ENCODE measurements at regions of chr11 and their contacts with region 1.

Region 1: GRCh38 chr11:62753736-62754603 is at the start of gene ZBTB3:
- DNase-seq: peak; percentile 99
- ATAC-seq: peak; percentile 92
- H3K4me3 ChIP-seq: peak within 1 kb of the TSS; percentile 82 to 94 (median 86)
- H3K4me3 Mint-ChIP-seq: peak within 1 kb of the TSS; percentile 99
- H3K27ac ChIP-seq: peak within 1 kb of the TSS; percentile 80 to 84
- H3K27ac Mint-ChIP-seq: peak within 1 kb of the TSS; percentile 99
- H3K4me1 ChIP-seq: peaks cover 7 to 21% of the 10 kb centered on the region in 2 donors
- H3K4me1 Mint-ChIP-seq: peaks cover 27% of the 10 kb centered on the region
- H3K27me3 ChIP-seq: no peaks in the 10 kb centered on the region
- H3K27me3 Mint-ChIP-seq: no peaks in the 10 kb centered on the region
- CTCF ChIP-seq: no peak
- total RNA-seq, gene ZBTB3: 22.0 and 24.8 TPM in 2 replicates

Region 2: GRCh38 chr11:62017871-62018655 is 735.9 kb before region 1 on chr11:
- CTCF ChIA-PET with region 1: no interaction called
- POLR2A ChIA-PET with region 1: interaction called, 13 read pairs
- intact Hi-C with region 1: no loop called
- DNase-seq: no peak
- ATAC-seq: no peak
- H3K4me3 ChIP-seq: no peak overlapping the region
- H3K4me3 Mint-ChIP-seq: no peak overlapping the region
- H3K27ac ChIP-seq: no peak overlapping the region
- H3K27ac Mint-ChIP-seq: no peak overlapping the region
- H3K4me1 ChIP-seq: peaks cover 6 to 9% of the 10 kb centered on the region in 2 donors
- H3K4me1 Mint-ChIP-seq: peaks cover 9% of the 10 kb centered on the region
- H3K27me3 ChIP-seq: no peaks in the 10 kb centered on the region
- H3K27me3 Mint-ChIP-seq: no peaks in the 10 kb centered on the region
- CTCF ChIP-seq: no peak

Region 3: DNA sequence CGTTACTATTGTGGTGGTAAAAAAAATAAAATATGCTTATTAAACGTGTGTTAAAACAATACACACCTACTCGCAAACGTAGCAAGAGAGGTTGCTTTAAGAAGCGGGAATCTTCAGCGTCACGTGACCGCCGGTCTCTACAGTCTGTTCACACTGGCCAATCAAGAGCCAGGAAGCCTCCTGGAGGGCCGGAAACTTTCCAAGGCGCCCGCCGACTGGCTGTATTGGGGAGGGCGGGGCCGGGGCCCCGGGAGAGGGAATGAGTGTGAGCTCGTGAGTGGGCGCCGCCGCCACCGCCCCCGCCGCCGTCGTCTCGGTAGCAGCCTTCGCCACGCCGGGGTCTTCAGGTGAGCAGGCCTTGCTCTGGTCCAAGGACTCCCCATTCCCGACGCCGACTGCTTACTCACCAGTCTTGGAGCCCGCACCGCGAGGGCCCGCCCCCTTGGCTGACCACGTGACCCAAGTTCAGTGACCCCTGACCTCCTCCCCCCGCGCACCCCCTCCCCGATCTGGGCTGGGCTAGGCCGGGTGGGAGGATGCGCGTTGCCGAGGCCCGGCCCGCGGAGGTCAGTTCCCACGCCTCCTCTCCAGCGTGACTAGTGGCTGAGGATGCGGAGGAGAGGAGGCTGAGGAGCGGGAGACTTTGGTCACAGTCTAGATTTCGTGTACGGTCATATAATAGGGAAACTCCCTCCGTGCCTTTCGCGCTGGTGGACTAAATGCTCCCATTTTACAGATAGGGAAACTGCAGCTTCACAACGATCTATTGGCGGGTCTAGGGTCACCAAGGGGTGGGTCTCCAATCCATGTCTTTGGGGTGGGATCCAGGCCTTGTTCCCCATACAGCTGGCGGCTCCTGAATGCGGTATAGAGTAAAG is 17.4 kb after region 1 on chr11 and contains the start of gene TAF6L:
- CTCF ChIA-PET with region 1: interaction called, 8 read pairs
- POLR2A ChIA-PET with region 1: interaction called, 38 read pairs
- intact Hi-C with region 1: no loop called
- DNase-seq: peak; percentile 88
- ATAC-seq: peak; percentile 90
- H3K4me3 ChIP-seq: peak within 1 kb of the TSS; percentile 58 to 97 (median 68)
- H3K4me3 Mint-ChIP-seq: peak within 1 kb of the TSS; percentile 95
- H3K27ac ChIP-seq: peak within 1 kb of the TSS; percentile 63 to 84
- H3K27ac Mint-ChIP-seq: peak within 1 kb of the TSS; percentile 96
- H3K4me1 ChIP-seq: peaks cover 15 to 23% of the 10 kb centered on the region in 2 donors
- H3K4me1 Mint-ChIP-seq: peaks cover 26% of the 10 kb centered on the region
- H3K27me3 ChIP-seq: no peaks in the 10 kb centered on the region
- H3K27me3 Mint-ChIP-seq: no peaks in the 10 kb centered on the region
- CTCF ChIP-seq: no peak
- total RNA-seq, gene TAF6L: 43.2 and 48.2 TPM in 2 replicates

Region 4: DNA sequence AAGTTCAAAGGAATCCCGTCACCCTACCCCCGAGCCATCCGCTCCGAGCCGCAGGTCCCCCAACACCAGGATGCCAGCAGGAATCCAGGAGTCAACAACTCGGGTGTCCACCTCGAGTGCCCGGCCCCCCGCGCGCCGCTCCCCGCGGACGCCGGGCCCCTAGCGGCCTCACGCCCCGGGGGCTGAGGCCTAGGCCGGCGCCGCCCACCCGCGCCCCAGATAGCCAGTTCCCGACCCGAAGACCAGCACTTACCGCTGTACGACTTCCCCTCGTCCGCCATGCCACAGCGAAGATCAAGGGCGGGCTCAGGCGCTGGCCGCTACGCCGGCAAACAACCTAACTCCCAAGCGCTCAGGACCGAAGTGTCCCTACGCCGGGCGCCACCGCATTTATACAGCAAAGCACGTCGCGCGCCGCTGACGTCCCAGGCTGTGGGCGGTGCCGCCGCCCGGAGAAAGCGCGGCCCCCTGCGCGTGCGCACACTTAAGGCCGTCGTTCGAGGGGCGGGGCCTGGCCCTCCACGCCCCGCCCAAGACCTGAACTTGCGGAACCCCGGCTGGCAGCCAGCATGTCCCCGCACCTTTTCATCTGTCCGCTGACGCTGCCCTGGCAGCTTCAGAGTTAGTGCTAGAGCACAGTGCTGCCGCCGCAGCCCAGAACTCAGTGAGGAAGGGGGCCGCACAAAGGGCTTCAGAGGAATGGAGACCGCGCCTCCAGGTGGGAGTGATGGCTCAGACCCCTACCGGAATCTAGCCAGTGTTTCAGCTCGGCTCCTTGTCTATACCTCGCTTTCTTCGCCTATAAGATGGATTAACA is 51.3 kb after region 1 on chr11 and contains the start of gene NXF1:
- CTCF ChIA-PET with region 1: no interaction called
- POLR2A ChIA-PET with region 1: interaction called, 10 read pairs
- intact Hi-C with region 1: no loop called
- DNase-seq: peak; percentile 98
- ATAC-seq: peak; percentile 87
- H3K4me3 ChIP-seq: peak within 1 kb of the TSS; percentile 77 to 96 (median 89)
- H3K4me3 Mint-ChIP-seq: peak within 1 kb of the TSS; percentile 100
- H3K27ac ChIP-seq: peak within 1 kb of the TSS; percentile 69 to 86
- H3K27ac Mint-ChIP-seq: peak within 1 kb of the TSS; percentile 99
- H3K4me1 ChIP-seq: peaks cover 11 to 25% of the 10 kb centered on the region in 2 donors
- H3K4me1 Mint-ChIP-seq: peaks cover 32% of the 10 kb centered on the region
- H3K27me3 ChIP-seq: no peaks in the 10 kb centered on the region
- H3K27me3 Mint-ChIP-seq: no peaks in the 10 kb centered on the region
- CTCF ChIP-seq: peak; percentile 22
- total RNA-seq, gene NXF1: 161 TPM in 2 replicates